ENCODE measurements at regions of chr4 and their contacts with region 1.

Region 1: GRCh38 chr4:119493419-119493818 is 135.2 kb downstream of the PDE5A start:
- DNase-seq: no peak
- H3K4me3 Mint-ChIP-seq: no peak overlapping the region
- H3K27ac Mint-ChIP-seq: no peak overlapping the region
- H3K4me1 Mint-ChIP-seq: no peaks in the 10 kb centered on the region
- H3K27me3 Mint-ChIP-seq: no peaks in the 10 kb centered on the region

Region 2: GRCh38 chr4:119314356-119314755 is 179.1 kb before region 1 on chr4:
- CTCF ChIA-PET with region 1: interaction called, 20 read pairs
- DNase-seq: peak; percentile 49
- H3K4me3 Mint-ChIP-seq: no peak overlapping the region
- H3K27ac Mint-ChIP-seq: no peak overlapping the region
- H3K4me1 Mint-ChIP-seq: no peaks in the 10 kb centered on the region
- H3K27me3 Mint-ChIP-seq: peaks cover 4% of the 10 kb centered on the region

Region 3: DNA sequence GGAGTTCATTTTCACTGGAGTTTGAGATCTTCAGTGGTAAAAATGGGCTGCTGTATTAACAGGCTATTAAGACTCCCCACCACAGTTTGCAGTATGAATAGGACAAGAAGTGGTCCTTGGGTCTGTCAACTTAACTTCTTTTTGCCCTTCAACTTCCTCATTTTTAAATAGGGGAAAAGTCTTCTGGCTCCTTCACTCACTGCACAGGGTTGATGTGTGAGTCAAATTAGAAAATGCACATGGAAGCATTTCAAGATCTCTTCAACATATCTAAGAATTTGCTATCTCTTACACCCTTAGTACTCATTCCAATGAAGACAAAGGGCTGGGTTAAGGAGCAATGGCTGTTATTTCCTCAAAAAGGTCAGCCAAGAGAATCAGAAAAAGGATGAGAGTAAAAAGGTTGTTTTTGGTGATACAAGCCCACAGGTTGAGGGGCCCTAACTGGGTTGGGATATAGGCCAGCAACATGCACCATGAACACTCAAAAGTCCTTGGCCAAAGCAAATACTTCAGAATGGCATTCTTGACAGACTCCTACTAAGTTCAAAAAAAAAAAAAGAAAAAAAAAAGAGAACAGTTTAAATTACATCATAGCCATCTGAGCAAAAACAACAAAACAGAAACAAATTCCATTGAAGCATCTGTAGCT is 121.8 kb after region 1 on chr4:
- CTCF ChIA-PET with region 1: no interaction called
- DNase-seq: no peak
- H3K4me3 Mint-ChIP-seq: no peak overlapping the region
- H3K27ac Mint-ChIP-seq: no peak overlapping the region
- H3K4me1 Mint-ChIP-seq: no peaks in the 10 kb centered on the region
- H3K27me3 Mint-ChIP-seq: peaks cover 4% of the 10 kb centered on the region

Region 4: GRCh38 chr4:119984996-119985395 is 491.6 kb after region 1 on chr4:
- CTCF ChIA-PET with region 1: no interaction called
- DNase-seq: no peak
- H3K4me3 Mint-ChIP-seq: no peak overlapping the region
- H3K27ac Mint-ChIP-seq: no peak overlapping the region
- H3K4me1 Mint-ChIP-seq: no peaks in the 10 kb centered on the region
- H3K27me3 Mint-ChIP-seq: no peaks in the 10 kb centered on the region